ENCODE measurements at regions of chr3 and their contacts with region 1.

Region 1: DNA sequence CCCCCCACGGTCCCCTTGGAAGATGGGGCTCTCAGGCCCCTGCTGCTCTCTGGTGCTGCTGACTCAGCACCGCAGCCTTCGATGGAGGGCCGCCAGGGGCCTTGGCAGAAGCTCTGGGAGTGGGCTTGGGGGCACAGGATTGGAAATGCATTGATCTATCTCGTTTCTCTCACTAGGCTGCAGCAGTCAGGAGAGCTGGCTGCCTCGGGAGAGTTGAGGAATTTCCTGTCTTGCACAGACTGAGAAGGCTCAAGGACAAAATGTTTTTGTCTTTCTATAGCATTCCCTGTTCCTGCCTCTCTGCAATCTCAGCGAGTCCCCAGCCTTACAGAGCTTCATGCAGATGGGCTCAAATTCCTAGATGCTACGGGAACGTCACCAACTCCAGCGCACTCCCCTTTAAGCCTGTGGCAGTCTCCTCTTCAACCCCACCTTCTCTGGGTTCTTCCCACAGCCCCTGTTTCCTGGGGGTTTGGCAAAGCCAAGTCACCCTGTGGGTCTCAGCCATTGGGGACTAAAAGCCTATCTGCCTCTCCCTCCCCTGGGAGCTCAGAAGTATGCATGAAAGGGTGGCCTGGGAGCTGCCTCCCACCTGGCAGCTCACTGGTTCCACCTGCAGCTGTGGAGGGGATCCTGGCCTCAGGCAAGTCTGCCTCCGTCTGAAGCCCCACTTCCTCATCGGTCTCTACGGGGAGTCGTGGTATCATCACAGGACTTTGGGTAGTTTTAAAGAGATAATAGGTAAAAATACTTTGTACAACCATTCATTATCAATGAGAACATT is 127.4 kb upstream of the HACD2 start:
- DNase-seq: no peak
- ATAC-seq: no peak
- H3K4me3 ChIP-seq: no peak overlapping the region
- H3K27ac ChIP-seq: no peak overlapping the region
- H3K4me1 ChIP-seq: no peaks in the 10 kb centered on the region
- CTCF ChIP-seq: no peak
- EP300 ChIP-seq: no peak
- POLR2A ChIP-seq: no peak
- RAD21 ChIP-seq: no peak

Region 2: DNA sequence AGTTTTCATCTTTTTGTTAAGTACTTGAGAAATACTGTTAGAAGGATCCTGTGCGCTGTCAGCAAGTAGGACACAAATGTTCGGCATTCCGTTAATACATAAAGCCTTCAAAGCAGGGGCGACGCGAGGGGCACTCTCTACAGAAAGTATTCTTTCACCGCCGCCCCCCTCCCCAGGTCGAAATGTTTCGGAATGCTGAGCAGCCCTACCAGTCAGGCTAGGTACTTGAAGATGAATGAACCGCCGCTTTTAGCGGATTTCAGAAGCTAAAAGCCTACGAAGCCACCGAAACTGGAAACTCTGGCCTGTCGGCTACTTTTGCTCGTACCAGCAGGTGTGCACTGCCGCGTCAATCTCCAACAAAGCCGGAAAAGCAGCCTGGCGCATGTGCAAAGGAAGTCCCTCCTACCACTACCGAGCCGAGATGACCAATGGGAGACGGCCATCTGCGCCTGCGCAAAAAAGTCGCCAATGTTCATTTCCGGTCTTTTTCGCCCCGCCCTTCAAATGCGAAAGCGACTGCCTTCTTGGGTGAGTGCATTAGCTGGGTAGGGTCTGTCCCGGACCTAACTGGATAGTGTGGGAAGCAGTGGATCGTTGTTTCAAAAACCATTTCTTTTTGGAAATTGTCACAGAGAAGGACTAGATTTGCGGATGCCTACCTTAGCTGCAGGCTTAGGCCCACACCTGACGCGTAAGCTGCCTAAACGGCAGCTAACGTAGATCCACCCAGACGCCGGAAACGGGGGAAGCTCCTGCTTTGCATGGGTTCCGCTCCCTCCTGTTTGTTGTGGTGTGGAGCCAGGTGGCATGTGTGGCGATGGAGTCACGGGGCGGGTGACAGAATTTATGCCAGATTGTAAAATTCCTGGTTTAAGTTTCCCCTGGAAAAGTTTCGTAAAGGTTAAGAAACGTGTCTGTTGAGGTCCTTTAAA is 1296.3 kb before region 1 on chr3 and contains the start of gene WDR5B:
- CTCF ChIA-PET with region 1: no interaction called
- POLR2A ChIA-PET with region 1: no interaction called
- DNase-seq: peak; percentile 98
- ATAC-seq: peak; percentile 95 to 98
- H3K4me3 ChIP-seq: peak within 1 kb of the TSS; percentile 74
- H3K27ac ChIP-seq: peak within 1 kb of the TSS; percentile 87 to 90
- H3K4me1 ChIP-seq: peaks cover 16% of the 10 kb centered on the region
- CTCF ChIP-seq: no peak
- EP300 ChIP-seq: no peak
- POLR2A ChIP-seq: peak; percentile 62
- RAD21 ChIP-seq: 0 out of 5 replicates have a peak, but pooled peaks of 1 of the 2 experiments have one; percentile 1
- polyA plus RNA-seq, gene WDR5B: 9.0 and 10.2 TPM in 2 replicates

Region 3: DNA sequence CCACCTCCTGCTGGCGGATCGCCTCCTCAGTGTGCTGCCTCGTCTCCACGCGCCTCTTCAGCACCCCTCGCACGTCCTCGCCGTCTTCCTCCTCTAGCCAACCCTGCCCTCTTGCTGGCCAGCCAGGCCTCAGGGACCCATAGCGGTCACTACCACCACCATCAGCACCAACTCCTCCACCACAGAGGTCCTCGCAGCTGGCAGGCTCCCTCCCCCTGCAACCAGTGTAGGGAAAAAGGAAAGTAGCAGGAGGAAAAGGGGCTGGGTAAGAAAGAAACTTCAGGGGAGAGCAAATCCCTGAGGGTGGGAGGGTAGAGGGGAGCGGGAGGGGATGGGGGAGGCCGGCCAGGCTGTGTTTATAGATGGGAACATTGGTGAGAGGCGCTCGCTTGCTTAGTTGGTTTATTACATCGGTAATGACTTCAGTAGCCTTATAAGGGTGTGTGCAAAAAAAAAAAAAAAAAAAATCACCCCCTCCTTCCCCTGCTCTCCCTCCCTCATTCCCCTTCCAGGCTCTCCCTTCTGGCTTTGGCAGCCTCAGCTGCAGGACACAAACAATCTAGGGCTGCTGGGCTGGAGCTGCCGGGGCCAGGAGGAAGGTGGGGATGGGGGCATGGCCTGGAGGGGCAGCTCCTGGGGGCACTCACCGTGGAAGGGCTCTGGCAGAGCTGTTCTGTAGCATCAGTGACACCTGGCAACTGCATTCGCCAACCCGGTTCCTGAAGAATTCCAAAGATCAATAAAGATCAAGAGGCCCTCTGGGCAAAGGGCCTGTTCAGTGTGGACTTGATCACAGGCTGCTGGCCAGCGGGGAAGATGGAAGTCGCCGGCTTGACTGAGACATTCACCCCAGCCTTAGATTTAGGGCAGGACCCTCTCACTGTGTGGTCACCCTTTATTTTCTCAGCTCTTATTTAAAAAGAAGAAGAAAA is 11.2 kb before region 1 on chr3:
- CTCF ChIA-PET with region 1: interaction called, 43 read pairs
- POLR2A ChIA-PET with region 1: no interaction called
- DNase-seq: no peak
- ATAC-seq: no peak
- H3K4me3 ChIP-seq: no peak overlapping the region
- H3K27ac ChIP-seq: no peak overlapping the region
- H3K4me1 ChIP-seq: no peaks in the 10 kb centered on the region
- CTCF ChIP-seq: no peak
- EP300 ChIP-seq: no peak
- POLR2A ChIP-seq: no peak
- RAD21 ChIP-seq: no peak

Region 4: DNA sequence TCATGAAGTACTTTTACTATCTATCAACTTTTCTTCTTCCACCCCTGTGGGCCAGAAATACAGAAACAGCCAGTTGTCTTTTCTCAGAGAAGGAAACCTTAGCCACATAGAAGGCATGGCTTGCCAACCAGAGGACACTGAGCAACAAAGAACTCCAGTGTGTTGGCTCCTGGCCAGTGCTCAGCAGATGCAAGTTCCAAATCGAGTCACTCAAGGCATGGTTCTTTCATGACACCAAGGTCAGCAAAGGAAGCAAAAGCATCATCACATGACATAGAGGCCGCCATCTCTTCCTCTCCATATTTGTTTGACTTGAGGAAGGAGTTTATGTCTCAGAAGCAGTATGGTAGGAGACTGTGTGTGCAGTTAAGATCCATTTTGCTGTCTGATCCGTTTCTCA is 79.6 kb after region 1 on chr3:
- CTCF ChIA-PET with region 1: no interaction called
- POLR2A ChIA-PET with region 1: no interaction called
- DNase-seq: no peak
- ATAC-seq: no peak
- H3K4me3 ChIP-seq: no peak overlapping the region
- H3K27ac ChIP-seq: peak overlapping the region in 1 of 2 experiments; percentile 71; a peak in 3 of 6 replicates
- H3K4me1 ChIP-seq: peaks cover 39% of the 10 kb centered on the region
- CTCF ChIP-seq: no peak
- EP300 ChIP-seq: no peak
- POLR2A ChIP-seq: no peak
- RAD21 ChIP-seq: no peak